CD8-positive, alpha-beta T cell (primary cell): ENCODE measurements at regions of chr9 and their contacts with region 1.

Region 1: GRCh38 chr9:36873247-36873875 is 160.7 kb downstream of the PAX5 start:
- DNase-seq: peak; percentile 46 to 83 (median 73)
- ATAC-seq: peak; percentile 57
- H3K4me3 ChIP-seq: no peak overlapping the region
- H3K4me3 Mint-ChIP-seq: no peak overlapping the region
- H3K27ac ChIP-seq: no peak overlapping the region
- H3K27ac Mint-ChIP-seq: no peak overlapping the region
- H3K4me1 ChIP-seq: no peaks in the 10 kb centered on the region
- H3K4me1 Mint-ChIP-seq: no peaks in the 10 kb centered on the region
- H3K27me3 ChIP-seq: no peaks in the 10 kb centered on the region
- H3K27me3 Mint-ChIP-seq: peaks cover 10% of the 10 kb centered on the region
- CTCF ChIP-seq: peak; percentile 84

Region 2: GRCh38 chr9:36716496-36716895 is 156.9 kb before region 1 on chr9:
- CTCF ChIA-PET with region 1: no interaction called
- POLR2A ChIA-PET with region 1: no interaction called
- intact Hi-C with region 1: no loop called
- DNase-seq: no peak
- ATAC-seq: no peak
- H3K4me3 ChIP-seq: no peak overlapping the region
- H3K4me3 Mint-ChIP-seq: no peak overlapping the region
- H3K27ac ChIP-seq: no peak overlapping the region
- H3K27ac Mint-ChIP-seq: no peak overlapping the region
- H3K4me1 ChIP-seq: no peaks in the 10 kb centered on the region
- H3K4me1 Mint-ChIP-seq: no peaks in the 10 kb centered on the region
- H3K27me3 ChIP-seq: no peaks in the 10 kb centered on the region
- H3K27me3 Mint-ChIP-seq: peaks cover 4% of the 10 kb centered on the region
- CTCF ChIP-seq: no peak

Region 3: GRCh38 chr9:36862206-36863145 is 10.9 kb before region 1 on chr9:
- CTCF ChIA-PET with region 1: interaction called, 11 read pairs
- POLR2A ChIA-PET with region 1: no interaction called
- intact Hi-C with region 1: no loop called
- DNase-seq: peak in 1 of 9 experiments; percentile 14
- ATAC-seq: no peak
- H3K4me3 ChIP-seq: no peak overlapping the region
- H3K4me3 Mint-ChIP-seq: no peak overlapping the region
- H3K27ac ChIP-seq: no peak overlapping the region
- H3K27ac Mint-ChIP-seq: no peak overlapping the region
- H3K4me1 ChIP-seq: no peaks in the 10 kb centered on the region
- H3K4me1 Mint-ChIP-seq: no peaks in the 10 kb centered on the region
- H3K27me3 ChIP-seq: no peaks in the 10 kb centered on the region
- H3K27me3 Mint-ChIP-seq: peaks cover 9% of the 10 kb centered on the region
- CTCF ChIP-seq: no peak

Region 4: DNA sequence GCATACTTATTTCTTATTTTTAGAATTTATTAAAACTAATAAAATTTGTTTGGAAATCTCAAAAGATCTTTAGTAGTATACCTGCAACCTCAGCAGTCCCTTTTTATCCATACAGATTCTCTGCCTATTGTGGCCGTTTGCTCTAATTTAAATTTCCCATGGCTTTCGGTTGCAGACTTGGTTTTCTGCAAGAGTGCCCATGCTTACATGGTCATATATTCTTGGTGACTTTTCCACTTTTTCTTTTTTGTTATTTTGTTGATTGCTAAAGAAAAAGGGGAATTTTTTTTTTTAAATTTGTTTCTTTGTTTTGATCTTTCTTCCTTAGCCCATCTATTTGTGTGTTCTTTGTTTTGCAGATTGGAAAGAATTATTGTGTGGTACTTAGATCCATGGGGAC is 267.7 kb after region 1 on chr9:
- CTCF ChIA-PET with region 1: no interaction called
- POLR2A ChIA-PET with region 1: no interaction called
- intact Hi-C with region 1: no loop called
- DNase-seq: no peak
- ATAC-seq: no peak
- H3K4me3 ChIP-seq: no peak overlapping the region
- H3K4me3 Mint-ChIP-seq: no peak overlapping the region
- H3K27ac ChIP-seq: no peak overlapping the region
- H3K27ac Mint-ChIP-seq: no peak overlapping the region
- H3K4me1 ChIP-seq: peaks cover 36% of the 10 kb centered on the region
- H3K4me1 Mint-ChIP-seq: peaks cover 68% of the 10 kb centered on the region
- H3K27me3 ChIP-seq: no peaks in the 10 kb centered on the region
- H3K27me3 Mint-ChIP-seq: no peaks in the 10 kb centered on the region
- CTCF ChIP-seq: no peak

Region 5: GRCh38 chr9:37271679-37272078 is 398.3 kb after region 1 on chr9:
- CTCF ChIA-PET with region 1: no interaction called
- POLR2A ChIA-PET with region 1: no interaction called
- intact Hi-C with region 1: loop called in 1 of 2 experiments (anchors 5 kb)
- DNase-seq: no peak
- ATAC-seq: no peak
- H3K4me3 ChIP-seq: no peak overlapping the region
- H3K4me3 Mint-ChIP-seq: no peak overlapping the region
- H3K27ac ChIP-seq: no peak overlapping the region
- H3K27ac Mint-ChIP-seq: no peak overlapping the region
- H3K4me1 ChIP-seq: no peaks in the 10 kb centered on the region
- H3K4me1 Mint-ChIP-seq: peaks cover 2% of the 10 kb centered on the region
- H3K27me3 ChIP-seq: no peaks in the 10 kb centered on the region
- H3K27me3 Mint-ChIP-seq: no peaks in the 10 kb centered on the region
- CTCF ChIP-seq: no peak

Region 6: GRCh38 chr9:37324261-37324683 is 450.9 kb after region 1 on chr9:
- CTCF ChIA-PET with region 1: interaction called, 13 read pairs
- POLR2A ChIA-PET with region 1: no interaction called
- intact Hi-C with region 1: loop called (anchors 1 to 5 kb)
- DNase-seq: peak in 2 of 9 experiments; percentile 5 to 16
- ATAC-seq: no peak
- H3K4me3 ChIP-seq: no peak overlapping the region
- H3K4me3 Mint-ChIP-seq: no peak overlapping the region
- H3K27ac ChIP-seq: no peak overlapping the region
- H3K27ac Mint-ChIP-seq: peak overlapping the region; percentile 66
- H3K4me1 ChIP-seq: no peaks in the 10 kb centered on the region
- H3K4me1 Mint-ChIP-seq: peaks cover 6% of the 10 kb centered on the region
- H3K27me3 ChIP-seq: no peaks in the 10 kb centered on the region
- H3K27me3 Mint-ChIP-seq: no peaks in the 10 kb centered on the region
- CTCF ChIP-seq: no peak

Region 7: GRCh38 chr9:37364751-37365360 is 491.5 kb after region 1 on chr9:
- CTCF ChIA-PET with region 1: interaction called, 18 read pairs
- POLR2A ChIA-PET with region 1: no interaction called
- intact Hi-C with region 1: loop called in 1 of 2 experiments (anchors 1 kb)
- DNase-seq: peak in 3 of 9 experiments; percentile 13 to 35 (median 30)
- ATAC-seq: no peak
- H3K4me3 ChIP-seq: no peak overlapping the region
- H3K4me3 Mint-ChIP-seq: no peak overlapping the region
- H3K27ac ChIP-seq: no peak overlapping the region
- H3K27ac Mint-ChIP-seq: no peak overlapping the region
- H3K4me1 ChIP-seq: no peaks in the 10 kb centered on the region
- H3K4me1 Mint-ChIP-seq: no peaks in the 10 kb centered on the region
- H3K27me3 ChIP-seq: no peaks in the 10 kb centered on the region
- H3K27me3 Mint-ChIP-seq: no peaks in the 10 kb centered on the region
- CTCF ChIP-seq: no peak

Region 8: DNA sequence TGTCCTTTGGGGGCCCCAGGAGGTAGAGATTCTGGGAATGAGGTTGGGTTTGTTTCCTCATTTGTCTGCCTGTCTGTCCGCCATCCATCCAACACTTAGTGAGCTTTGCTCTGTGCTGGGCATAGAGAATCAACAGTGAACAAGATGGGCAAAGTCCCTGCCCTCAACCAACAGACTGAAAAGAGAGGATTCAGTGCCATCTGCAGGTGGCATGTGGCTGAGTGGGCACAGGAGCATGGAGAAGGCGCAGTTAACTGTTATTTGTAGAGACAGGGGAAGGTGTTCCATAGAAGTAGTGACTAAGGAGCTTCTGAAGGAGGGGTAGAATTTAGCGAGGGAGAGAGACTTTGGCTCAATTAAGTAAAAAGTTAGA is 635.5 kb after region 1 on chr9:
- CTCF ChIA-PET with region 1: no interaction called
- POLR2A ChIA-PET with region 1: no interaction called
- intact Hi-C with region 1: loop called in 1 of 2 experiments (anchors 5 kb)
- DNase-seq: peak in 2 of 9 experiments; percentile 35 to 41
- ATAC-seq: no peak
- H3K4me3 ChIP-seq: no peak overlapping the region
- H3K4me3 Mint-ChIP-seq: no peak overlapping the region
- H3K27ac ChIP-seq: no peak overlapping the region
- H3K27ac Mint-ChIP-seq: peak overlapping the region; percentile 24
- H3K4me1 ChIP-seq: no peaks in the 10 kb centered on the region
- H3K4me1 Mint-ChIP-seq: peaks cover 12% of the 10 kb centered on the region
- H3K27me3 ChIP-seq: no peaks in the 10 kb centered on the region
- H3K27me3 Mint-ChIP-seq: no peaks in the 10 kb centered on the region
- CTCF ChIP-seq: no peak